T-cell (primary cell): ENCODE measurements at regions of chr7 and their contacts with region 1.

Region 1: GRCh38 chr7:4631664-4632171 is 50.4 kb upstream of the FOXK1 start:
- DNase-seq: no peak
- ATAC-seq: no peak
- H3K4me3 ChIP-seq: no peak overlapping the region
- H3K4me3 Mint-ChIP-seq: no peak overlapping the region
- H3K27ac ChIP-seq: no peak overlapping the region
- H3K27ac Mint-ChIP-seq: no peak overlapping the region
- H3K4me1 ChIP-seq: no peaks in the 10 kb centered on the region
- H3K4me1 Mint-ChIP-seq: no peaks in the 10 kb centered on the region
- H3K27me3 ChIP-seq: peaks cover 0 to 15% of the 10 kb centered on the region in 2 experiments
- H3K27me3 Mint-ChIP-seq: peaks cover 0 to 18% of the 10 kb centered on the region in 2 donors

Region 2: DNA sequence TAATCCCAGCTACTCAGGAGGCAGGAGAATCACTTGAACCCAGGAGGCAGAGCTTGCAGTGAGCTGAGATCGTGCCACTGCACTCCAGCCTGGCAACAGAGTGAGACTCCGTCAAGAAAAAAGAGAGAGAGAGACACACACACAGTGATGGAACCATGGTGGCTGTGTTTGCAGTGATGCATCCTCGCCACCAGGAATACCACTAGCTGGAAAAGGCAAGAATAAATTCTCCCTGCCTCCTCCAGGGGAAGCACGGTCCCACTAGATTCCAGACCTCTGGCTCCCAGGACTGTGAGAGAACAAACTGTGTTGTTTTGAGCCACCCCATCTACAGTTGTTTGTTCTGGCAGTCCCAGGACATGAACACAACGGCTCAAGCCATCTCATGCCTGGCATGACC is 270.0 kb before region 1 on chr7:
- CTCF ChIA-PET with region 1: no interaction called
- POLR2A ChIA-PET with region 1: no interaction called
- DNase-seq: no peak
- ATAC-seq: no peak
- H3K4me3 ChIP-seq: no peak overlapping the region
- H3K4me3 Mint-ChIP-seq: no peak overlapping the region
- H3K27ac ChIP-seq: no peak overlapping the region
- H3K27ac Mint-ChIP-seq: no peak overlapping the region
- H3K4me1 ChIP-seq: no peaks in the 10 kb centered on the region
- H3K4me1 Mint-ChIP-seq: no peaks in the 10 kb centered on the region
- H3K27me3 ChIP-seq: peaks cover 0 to 8% of the 10 kb centered on the region in 2 experiments
- H3K27me3 Mint-ChIP-seq: peaks cover 8 to 17% of the 10 kb centered on the region in 2 donors

Region 3: GRCh38 chr7:4519819-4520525 is 111.7 kb before region 1 on chr7:
- CTCF ChIA-PET with region 1: no interaction called
- POLR2A ChIA-PET with region 1: no interaction called
- DNase-seq: no peak
- ATAC-seq: no peak
- H3K4me3 ChIP-seq: no peak overlapping the region
- H3K4me3 Mint-ChIP-seq: no peak overlapping the region
- H3K27ac ChIP-seq: no peak overlapping the region
- H3K27ac Mint-ChIP-seq: no peak overlapping the region
- H3K4me1 ChIP-seq: no peaks in the 10 kb centered on the region
- H3K4me1 Mint-ChIP-seq: no peaks in the 10 kb centered on the region
- H3K27me3 ChIP-seq: peaks cover 0 to 9% of the 10 kb centered on the region in 2 experiments
- H3K27me3 Mint-ChIP-seq: peaks cover 21 to 31% of the 10 kb centered on the region in 2 donors

Region 4: DNA sequence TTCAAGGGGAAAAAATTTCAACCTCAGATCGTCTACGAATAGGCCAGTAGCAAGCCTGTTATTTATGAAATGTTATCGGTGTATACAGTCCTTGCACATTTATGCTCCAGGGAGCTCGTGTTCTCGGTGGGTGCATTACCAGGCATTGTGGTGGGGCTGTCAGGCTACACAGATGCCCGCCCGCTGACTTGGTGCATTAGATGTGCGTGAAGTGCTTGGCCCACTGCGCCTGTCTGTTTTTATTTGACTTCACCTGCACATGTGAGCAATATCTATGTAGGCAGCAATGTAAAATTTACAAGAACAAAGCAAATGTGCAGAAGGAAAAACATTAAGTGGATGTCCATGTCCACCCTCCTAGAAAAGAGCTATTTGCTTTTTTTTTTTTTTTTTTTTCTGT is 53.1 kb after region 1 on chr7:
- CTCF ChIA-PET with region 1: interaction called, 4 to 10 read pairs
- POLR2A ChIA-PET with region 1: no interaction called
- DNase-seq: no peak
- ATAC-seq: no peak
- H3K4me3 ChIP-seq: peak overlapping the region; percentile 11 to 77
- H3K4me3 Mint-ChIP-seq: peak overlapping the region; percentile 95 to 97 (median 96)
- H3K27ac ChIP-seq: no peak overlapping the region
- H3K27ac Mint-ChIP-seq: peak overlapping the region; percentile 97
- H3K4me1 ChIP-seq: peaks cover 26 to 67% of the 10 kb centered on the region in 2 experiments
- H3K4me1 Mint-ChIP-seq: peaks cover 54 to 66% (median 60%) of the 10 kb centered on the region in 3 donors
- H3K27me3 ChIP-seq: no peaks in the 10 kb centered on the region
- H3K27me3 Mint-ChIP-seq: no peaks in the 10 kb centered on the region